ENCODE measurements at regions of chr1 and their contacts with region 1.

Region 1: GRCh38 chr1:44792783-44793714 is 5.1 kb upstream of the BEST4 start:
- DNase-seq: no peak
- H3K4me3 ChIP-seq: no peak overlapping the region
- H3K27ac ChIP-seq: peak overlapping the region; percentile 66
- H3K4me1 ChIP-seq: peaks cover 8% of the 10 kb centered on the region
- H3K27me3 ChIP-seq: no peaks in the 10 kb centered on the region
- CTCF ChIP-seq: no peak

Region 2: GRCh38 chr1:44714944-44715571 is 78.0 kb before region 1 on chr1:
- CTCF ChIA-PET with region 1: no interaction called
- dilution Hi-C with region 1: no loop called
- in situ Hi-C with region 1: no loop called
- intact Hi-C with region 1: no loop called
- DNase-seq: peak; percentile 66
- H3K4me3 ChIP-seq: no peak overlapping the region
- H3K27ac ChIP-seq: no peak overlapping the region
- H3K4me1 ChIP-seq: no peaks in the 10 kb centered on the region
- H3K27me3 ChIP-seq: no peaks in the 10 kb centered on the region
- CTCF ChIP-seq: peak; percentile 94 to 99

Region 3: GRCh38 chr1:44962729-44963128 is 169.7 kb after region 1 on chr1:
- CTCF ChIA-PET with region 1: no interaction called
- dilution Hi-C with region 1: no loop called
- in situ Hi-C with region 1: no loop called
- intact Hi-C with region 1: no loop called
- DNase-seq: no peak
- H3K4me3 ChIP-seq: no peak overlapping the region
- H3K27ac ChIP-seq: no peak overlapping the region
- H3K4me1 ChIP-seq: peaks cover 9% of the 10 kb centered on the region
- H3K27me3 ChIP-seq: no peaks in the 10 kb centered on the region
- CTCF ChIP-seq: no peak

Region 4: GRCh38 chr1:44985747-44986359 is 192.8 kb after region 1 on chr1:
- CTCF ChIA-PET with region 1: no interaction called
- dilution Hi-C with region 1: no loop called
- in situ Hi-C with region 1: no loop called
- intact Hi-C with region 1: no loop called
- DNase-seq: peak; percentile 10
- H3K4me3 ChIP-seq: peak overlapping the region; percentile 76 to 94 (median 91)
- H3K27ac ChIP-seq: peak overlapping the region; percentile 46
- H3K4me1 ChIP-seq: peaks cover 10% of the 10 kb centered on the region
- H3K27me3 ChIP-seq: no peaks in the 10 kb centered on the region
- CTCF ChIP-seq: no peak

Region 5: DNA sequence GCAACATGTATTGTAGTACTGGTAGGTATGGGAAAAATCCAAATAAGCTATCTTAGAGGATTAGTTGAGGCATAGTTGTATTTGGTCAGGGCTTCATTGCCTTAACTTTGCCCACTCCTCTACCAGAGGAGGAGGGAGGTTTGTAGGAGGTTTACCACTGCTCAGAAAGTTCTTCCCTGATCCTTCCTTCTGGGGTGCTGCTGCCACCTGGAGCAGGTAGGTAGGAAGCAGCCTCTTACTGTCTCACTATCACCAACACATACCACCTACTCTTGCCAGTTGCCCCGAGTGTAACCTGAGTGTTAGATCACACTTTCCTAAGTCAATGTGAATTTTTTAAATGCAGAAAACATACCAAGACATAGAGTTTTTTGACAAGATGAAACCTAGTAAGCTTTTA is 437.5 kb after region 1 on chr1:
- CTCF ChIA-PET with region 1: no interaction called
- dilution Hi-C with region 1: no loop called
- in situ Hi-C with region 1: no loop called
- intact Hi-C with region 1: loop called (anchors 5 kb)
- DNase-seq: no peak
- H3K4me3 ChIP-seq: no peak overlapping the region
- H3K27ac ChIP-seq: no peak overlapping the region
- H3K4me1 ChIP-seq: no peaks in the 10 kb centered on the region
- H3K27me3 ChIP-seq: no peaks in the 10 kb centered on the region
- CTCF ChIP-seq: peak in 1 of 2 donors; percentile 66